ENCODE measurements at regions of chr2 and their contacts with region 1.

Region 1: DNA sequence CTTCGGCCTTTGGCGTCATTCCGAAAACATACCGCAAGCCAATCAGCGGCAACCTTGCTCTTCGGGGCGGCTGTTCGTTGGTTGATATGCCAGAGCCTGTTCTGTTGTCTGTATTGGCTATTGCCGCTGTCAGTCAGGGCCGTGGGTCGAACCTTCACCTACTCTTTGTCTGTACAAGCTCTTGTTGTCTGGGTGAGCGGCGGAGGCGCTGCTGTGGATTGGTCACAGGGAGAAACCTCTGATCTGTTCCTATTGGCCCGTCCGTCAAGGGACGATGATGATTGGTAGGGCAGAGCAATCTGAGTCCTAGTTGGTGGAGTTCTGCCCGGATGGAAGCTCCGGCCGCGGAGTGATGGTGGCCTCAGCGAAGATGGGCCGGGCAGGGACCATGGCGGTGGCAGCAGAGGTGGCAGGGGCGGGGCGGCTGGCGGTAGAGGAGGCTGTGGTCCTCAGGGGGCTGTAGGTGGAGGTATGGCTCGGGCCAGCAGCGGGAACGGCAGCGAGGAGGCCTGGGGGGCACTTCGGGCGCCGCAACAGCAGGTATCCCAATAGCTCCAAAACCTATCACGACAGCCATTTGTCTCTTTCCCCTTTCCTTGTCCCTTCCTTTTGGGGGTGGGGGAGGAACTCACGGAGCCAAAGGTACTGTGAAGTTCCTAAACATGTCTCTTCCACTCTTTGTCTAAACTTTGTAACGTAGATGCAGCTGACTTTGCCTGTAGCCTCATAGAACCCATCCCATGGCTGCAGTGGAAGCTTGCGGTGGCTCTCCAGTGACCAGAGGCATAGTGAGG is at the start of gene WBP1:
- DNase-seq: peak; percentile 100
- H3K4me3 ChIP-seq: peak within 1 kb of the TSS; percentile 80 to 87 (median 82)
- H3K27ac ChIP-seq: peak within 1 kb of the TSS; percentile 51
- H3K4me1 ChIP-seq: peaks cover 22% of the 10 kb centered on the region
- H3K27me3 ChIP-seq: peaks cover 0 to under 1% of the 10 kb centered on the region in 2 experiments
- CTCF ChIP-seq: no peak
- POLR2A ChIP-seq: peak; percentile 66
- total RNA-seq, gene WBP1: 44.5 and 50.5 TPM in 2 replicates

Region 2: GRCh38 chr2:74421221-74421870 is 37.0 kb before region 1 on chr2 and contains the starts of genes C2orf81 and WDR54:
- CTCF ChIA-PET with region 1: interaction called, 3 read pairs
- POLR2A ChIA-PET with region 1: no interaction called
- dilution Hi-C with region 1: no loop called
- intact Hi-C with region 1: loop called (anchors 1 kb)
- DNase-seq: peak; percentile 86
- H3K4me3 ChIP-seq: peak within 1 kb of the TSS; percentile 43 to 73 (median 66)
- H3K27ac ChIP-seq: no peak within 1 kb of the TSS
- H3K4me1 ChIP-seq: peaks cover 9% of the 10 kb centered on the region
- H3K27me3 ChIP-seq: peaks cover 7 to 14% of the 10 kb centered on the region in 2 experiments
- CTCF ChIP-seq: no peak
- POLR2A ChIP-seq: no peak
- total RNA-seq, gene C2orf81: 0.51 and 0.71 TPM in 2 replicates
- total RNA-seq, gene WDR54: 21.7 and 24.9 TPM in 2 replicates

Region 3: DNA sequence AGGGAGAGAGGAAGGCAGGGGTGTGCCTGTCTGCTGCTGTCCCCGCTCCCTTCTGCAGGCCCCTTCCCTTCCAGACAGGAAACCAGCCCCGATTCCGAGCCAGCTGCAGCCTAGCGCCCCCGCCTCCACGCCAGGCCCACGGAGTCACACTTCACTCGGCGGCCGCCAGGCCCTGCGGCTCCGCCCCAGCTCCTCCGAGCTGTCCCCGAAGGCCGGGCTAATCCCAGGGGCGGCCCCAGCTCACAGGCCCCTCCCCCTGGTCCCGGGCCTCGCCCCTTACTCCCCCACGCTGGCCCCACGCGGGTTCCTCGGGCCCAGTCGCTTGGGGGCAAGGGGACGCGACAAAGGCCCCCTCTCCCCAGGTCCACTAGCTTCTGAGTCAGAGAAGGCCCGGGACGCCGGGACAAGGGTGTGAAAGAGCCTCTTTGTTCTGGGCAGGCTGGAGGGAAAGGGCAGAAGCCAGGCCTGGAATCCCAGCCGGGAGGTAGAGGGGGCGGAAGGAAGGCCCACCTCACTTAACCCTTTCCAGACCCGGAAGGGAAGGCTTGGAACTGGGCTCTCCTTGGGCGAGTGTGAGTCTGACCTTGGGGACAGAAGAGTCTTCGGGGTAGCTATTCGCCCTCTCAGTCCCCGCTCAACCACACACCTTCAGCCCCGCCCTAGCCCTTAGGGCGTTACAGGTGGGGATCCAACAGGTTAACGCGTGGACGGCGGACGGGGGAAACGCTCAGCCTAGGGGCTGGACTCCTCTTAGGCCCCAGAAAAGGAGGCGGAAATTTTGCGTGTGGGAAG is 17.8 kb before region 1 on chr2:
- CTCF ChIA-PET with region 1: interaction called, 14 read pairs
- POLR2A ChIA-PET with region 1: interaction called, 3 read pairs
- dilution Hi-C with region 1: no loop called
- intact Hi-C with region 1: loop called (anchors 1 kb)
- DNase-seq: peak; percentile 89
- H3K4me3 ChIP-seq: peak overlapping the region in 2 of 3 experiments; percentile 47 to 56
- H3K27ac ChIP-seq: no peak overlapping the region
- H3K4me1 ChIP-seq: peaks cover 27% of the 10 kb centered on the region
- H3K27me3 ChIP-seq: peaks cover 18 to 32% of the 10 kb centered on the region in 2 experiments
- CTCF ChIP-seq: peak; percentile 5 to 41
- POLR2A ChIP-seq: peak; percentile 58

Region 4: GRCh38 chr2:74544634-74545033 is 86.3 kb after region 1 on chr2:
- CTCF ChIA-PET with region 1: no interaction called
- POLR2A ChIA-PET with region 1: no interaction called
- dilution Hi-C with region 1: no loop called
- intact Hi-C with region 1: no loop called
- DNase-seq: no peak
- H3K4me3 ChIP-seq: no peak overlapping the region
- H3K27ac ChIP-seq: no peak overlapping the region
- H3K4me1 ChIP-seq: peaks cover 12% of the 10 kb centered on the region
- H3K27me3 ChIP-seq: peaks cover 15 to 26% of the 10 kb centered on the region in 2 experiments
- CTCF ChIP-seq: no peak
- POLR2A ChIP-seq: no peak